ENCODE measurements at regions of chr4 and their contacts with region 1.

Region 1: GRCh38 chr4:86497980-86498862 is 95.9 kb upstream of the PTPN13 start:
- DNase-seq: peak; percentile 8
- H3K4me3 Mint-ChIP-seq: no peak overlapping the region
- H3K27ac Mint-ChIP-seq: no peak overlapping the region
- H3K4me1 Mint-ChIP-seq: peaks cover 18% of the 10 kb centered on the region
- H3K27me3 Mint-ChIP-seq: no peaks in the 10 kb centered on the region
- CTCF ChIP-seq: peak; percentile 61

Region 2: DNA sequence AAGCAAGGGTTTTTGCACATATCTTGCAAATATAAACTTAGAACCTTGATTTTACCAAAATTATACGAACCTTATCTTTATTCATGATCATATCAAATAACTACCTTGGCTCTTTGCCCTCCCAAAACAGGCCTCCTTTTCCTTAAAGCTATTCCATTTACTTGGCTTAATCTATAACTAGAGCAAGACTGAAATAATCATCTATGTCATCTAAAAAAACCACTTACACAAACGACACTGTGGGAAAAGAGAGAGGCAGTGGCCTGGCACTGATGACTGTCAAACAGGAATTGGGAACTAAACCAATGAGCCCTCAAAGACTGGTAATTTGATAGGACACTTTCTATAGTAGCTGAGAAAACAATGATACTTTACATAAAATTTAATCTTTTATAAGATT is 84.2 kb after region 1 on chr4:
- CTCF ChIA-PET with region 1: no interaction called
- intact Hi-C with region 1: loop called (anchors 5 kb)
- DNase-seq: peak; percentile 11
- H3K4me3 Mint-ChIP-seq: peak overlapping the region; percentile 37
- H3K27ac Mint-ChIP-seq: no peak overlapping the region
- H3K4me1 Mint-ChIP-seq: peaks cover 13% of the 10 kb centered on the region
- H3K27me3 Mint-ChIP-seq: no peaks in the 10 kb centered on the region
- CTCF ChIP-seq: no peak

Region 3: DNA sequence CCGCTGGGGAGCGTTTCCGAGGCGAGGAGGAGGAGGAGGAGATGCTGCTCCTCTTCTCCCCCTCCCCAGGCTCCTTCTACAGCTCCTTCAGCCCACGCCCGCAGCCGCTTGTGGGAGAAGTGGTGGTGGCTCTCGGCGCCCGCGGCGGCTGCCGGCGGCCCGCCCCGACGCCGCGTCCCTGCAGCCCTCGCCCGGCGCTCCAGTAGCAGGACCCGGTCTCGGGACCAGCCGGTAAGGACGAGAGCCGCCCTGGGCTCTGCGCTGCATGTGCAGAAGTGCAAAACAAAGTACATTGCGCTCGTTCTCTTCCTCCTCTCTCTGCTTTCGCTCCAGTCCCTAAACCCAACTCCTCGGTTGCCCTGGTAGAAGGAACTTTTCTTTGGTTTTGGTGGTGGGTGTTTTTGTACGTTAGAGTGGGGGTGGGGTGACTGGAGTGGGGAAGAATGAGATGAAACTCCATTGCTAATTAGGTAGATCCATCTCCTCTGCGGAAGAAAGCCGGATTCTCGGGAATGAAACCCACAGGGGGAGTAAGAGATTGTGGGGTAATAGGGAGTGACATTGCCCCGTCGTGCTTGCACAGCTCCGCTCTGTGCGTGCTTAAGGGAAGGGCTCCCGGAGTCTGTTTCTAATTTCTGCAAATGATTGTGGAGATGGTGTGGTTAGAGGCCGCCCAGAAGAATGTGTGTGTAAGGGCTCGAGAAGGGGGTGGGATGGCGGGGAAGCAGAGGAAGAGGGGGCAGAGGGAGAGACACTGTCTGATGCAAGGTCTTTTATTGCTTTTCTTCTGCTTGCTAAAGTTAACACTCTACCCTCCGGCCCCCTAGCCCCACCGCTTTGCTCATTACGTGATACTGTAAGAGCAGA is 96.6 kb after region 1 on chr4:
- CTCF ChIA-PET with region 1: interaction called, 4 read pairs
- intact Hi-C with region 1: loop called (anchors 5 kb)
- DNase-seq: peak; percentile 31
- H3K4me3 Mint-ChIP-seq: peak overlapping the region; percentile 85
- H3K27ac Mint-ChIP-seq: peak overlapping the region; percentile 69
- H3K4me1 Mint-ChIP-seq: peaks cover 18% of the 10 kb centered on the region
- H3K27me3 Mint-ChIP-seq: no peaks in the 10 kb centered on the region
- CTCF ChIP-seq: no peak

Region 4: GRCh38 chr4:86720508-86721068 is 222.4 kb after region 1 on chr4:
- CTCF ChIA-PET with region 1: interaction called, 4 read pairs
- intact Hi-C with region 1: loop called (anchors 10 kb)
- DNase-seq: peak; percentile 6
- H3K4me3 Mint-ChIP-seq: peak overlapping the region; percentile 30
- H3K27ac Mint-ChIP-seq: peak overlapping the region; percentile 91
- H3K4me1 Mint-ChIP-seq: peaks cover 25% of the 10 kb centered on the region
- H3K27me3 Mint-ChIP-seq: no peaks in the 10 kb centered on the region
- CTCF ChIP-seq: no peak

Region 5: GRCh38 chr4:86788826-86789225 is 290.6 kb after region 1 on chr4:
- CTCF ChIA-PET with region 1: no interaction called
- intact Hi-C with region 1: loop called (anchors 10 kb)
- DNase-seq: no peak
- H3K4me3 Mint-ChIP-seq: no peak overlapping the region
- H3K27ac Mint-ChIP-seq: no peak overlapping the region
- H3K4me1 Mint-ChIP-seq: no peaks in the 10 kb centered on the region
- H3K27me3 Mint-ChIP-seq: no peaks in the 10 kb centered on the region
- CTCF ChIP-seq: no peak

Measured in Calu3 (cell line).